ENCODE measurements at regions of chr6 and their contacts with region 1.

Region 1: DNA sequence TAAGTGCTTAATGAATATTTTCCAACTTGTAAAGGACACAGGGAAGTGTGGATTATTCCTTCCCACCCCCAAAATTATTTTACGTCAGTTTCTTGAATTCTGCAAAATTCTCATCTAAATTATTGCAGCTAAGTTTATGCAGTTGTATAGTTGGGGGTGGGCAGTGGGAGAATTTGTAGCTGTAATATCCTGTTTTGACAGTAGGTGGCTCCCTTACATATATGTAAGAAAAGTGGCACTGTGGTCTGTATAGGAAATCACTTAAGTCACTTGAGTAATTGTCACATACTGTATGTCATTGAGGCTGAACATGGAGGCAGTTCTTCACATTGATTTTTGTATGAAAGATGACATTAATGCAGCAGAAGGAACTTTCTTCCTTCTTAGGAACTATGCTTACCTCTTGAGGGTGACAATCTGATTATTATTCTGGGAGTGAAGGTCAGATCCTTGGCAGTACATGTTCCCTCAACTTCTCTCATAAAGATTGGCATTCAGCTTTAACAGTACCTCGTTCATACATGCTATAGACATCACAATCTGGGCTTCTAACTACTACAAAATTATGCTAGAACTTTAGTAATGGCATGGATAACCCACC is 14.7 kb upstream of the CFAP206 start:
- DNase-seq: peak; percentile 38
- H3K4me3 Mint-ChIP-seq: no peak overlapping the region
- H3K27ac Mint-ChIP-seq: no peak overlapping the region
- H3K4me1 Mint-ChIP-seq: no peaks in the 10 kb centered on the region
- H3K27me3 Mint-ChIP-seq: no peaks in the 10 kb centered on the region
- CTCF ChIP-seq: peak; percentile 55

Region 2: DNA sequence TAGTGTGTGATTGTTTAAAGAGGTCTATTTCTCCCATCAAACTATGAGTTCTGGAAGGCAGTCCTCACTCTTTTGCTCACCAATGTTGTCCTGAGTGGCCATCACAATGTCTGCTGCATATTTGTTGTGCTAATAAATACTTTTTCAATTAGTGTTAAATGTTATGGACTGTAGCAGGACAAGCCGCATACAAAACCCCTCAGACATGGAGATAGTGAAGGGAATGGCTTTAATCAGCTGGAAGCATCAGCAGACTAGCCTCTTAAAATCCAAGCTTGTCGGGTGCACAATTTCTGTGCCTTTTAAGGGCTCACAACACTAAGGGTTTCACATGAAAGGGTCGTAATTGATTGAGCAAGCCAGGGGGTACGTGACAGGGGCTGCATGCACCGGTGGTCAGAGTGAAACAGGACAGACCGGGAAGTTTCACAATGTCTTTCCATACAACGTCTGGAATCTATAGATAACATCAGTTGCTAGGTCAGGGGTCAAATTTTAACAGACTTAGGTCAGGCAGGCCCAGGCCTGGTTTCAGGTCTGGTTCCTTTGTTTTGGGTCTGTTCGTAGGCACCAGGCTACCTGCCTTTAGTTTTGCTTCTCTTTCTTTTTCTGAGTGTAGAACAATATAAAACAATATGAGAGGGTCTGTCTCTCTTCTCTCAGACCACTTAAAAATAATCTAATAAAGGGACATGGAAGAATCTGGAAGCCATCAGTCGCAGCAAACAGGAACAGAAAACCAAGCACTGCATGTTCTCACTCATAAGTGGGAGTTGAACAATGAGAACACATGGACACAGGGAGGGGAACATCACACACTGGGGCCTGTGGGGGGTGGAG is 783.4 kb before region 1 on chr6:
- CTCF ChIA-PET with region 1: no interaction called
- intact Hi-C with region 1: no loop called
- DNase-seq: no peak
- H3K4me3 Mint-ChIP-seq: no peak overlapping the region
- H3K27ac Mint-ChIP-seq: no peak overlapping the region
- H3K4me1 Mint-ChIP-seq: no peaks in the 10 kb centered on the region
- H3K27me3 Mint-ChIP-seq: no peaks in the 10 kb centered on the region
- CTCF ChIP-seq: no peak

Region 3: DNA sequence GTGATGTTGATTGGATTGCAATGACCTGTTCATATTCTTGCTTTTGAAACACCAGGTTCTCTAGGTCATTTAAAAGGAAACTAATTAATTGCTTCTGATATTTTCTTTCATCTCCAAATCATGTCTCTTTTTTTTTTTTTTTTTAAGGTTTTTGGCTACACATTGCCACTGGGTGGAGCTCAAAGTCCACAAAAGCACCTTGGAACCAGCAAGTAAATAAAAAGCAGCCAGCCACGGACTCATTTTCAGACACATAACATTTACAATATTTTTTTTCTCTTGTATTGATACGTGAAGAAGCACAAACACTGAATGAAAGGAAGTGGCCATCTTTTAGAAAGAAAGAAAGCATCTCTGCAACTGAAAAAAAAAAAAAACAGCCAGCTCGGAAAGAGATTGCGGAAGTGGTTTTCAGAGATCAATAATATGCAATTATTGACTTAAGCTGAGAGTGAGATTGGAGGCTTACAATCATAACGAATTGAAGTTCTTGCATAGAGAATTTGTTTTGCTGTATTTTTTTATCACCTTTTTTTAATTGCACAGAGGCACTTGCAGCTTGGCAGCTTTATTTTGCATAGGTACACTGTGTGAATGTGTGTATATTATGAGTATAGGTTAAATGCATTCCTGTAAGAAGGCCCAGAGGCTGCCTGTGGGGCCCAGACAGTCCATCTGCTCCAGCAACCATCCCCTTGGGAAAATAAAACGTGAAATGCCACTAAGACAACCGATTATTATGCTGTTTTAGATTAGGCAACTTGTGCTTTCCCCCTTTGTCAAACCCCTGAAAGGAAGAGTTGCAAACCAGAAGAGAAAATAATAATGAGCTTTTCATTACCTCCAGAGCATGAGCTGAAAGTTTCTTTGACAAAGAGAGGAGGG is 326.4 kb before region 1 on chr6:
- CTCF ChIA-PET with region 1: no interaction called
- intact Hi-C with region 1: loop called (anchors 2 kb)
- DNase-seq: peak; percentile 42
- H3K4me3 Mint-ChIP-seq: peak overlapping the region; percentile 50
- H3K27ac Mint-ChIP-seq: no peak overlapping the region
- H3K4me1 Mint-ChIP-seq: peaks cover 9% of the 10 kb centered on the region
- H3K27me3 Mint-ChIP-seq: peaks cover 29% of the 10 kb centered on the region
- CTCF ChIP-seq: peak; percentile 51

Region 4: DNA sequence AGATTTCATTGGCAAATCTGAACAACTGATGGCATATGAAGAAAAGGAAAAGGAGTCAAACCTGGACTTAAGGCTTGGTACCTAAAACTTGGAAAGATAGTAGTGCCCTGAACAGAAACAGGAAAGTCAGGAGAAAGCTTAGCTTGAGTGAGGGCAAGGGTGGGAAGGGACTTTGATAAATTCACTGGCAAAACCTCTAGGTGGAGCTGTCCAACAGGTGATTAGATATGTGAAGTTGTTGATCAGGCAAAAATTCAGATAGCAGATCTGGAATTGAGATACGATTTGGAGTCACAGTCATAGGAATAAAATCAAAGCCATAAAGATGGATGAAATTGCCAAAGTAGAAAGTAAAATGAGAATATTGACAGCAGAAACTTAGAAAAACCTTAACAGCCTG is 253.9 kb before region 1 on chr6:
- CTCF ChIA-PET with region 1: no interaction called
- intact Hi-C with region 1: loop called (anchors 1 kb)
- DNase-seq: peak; percentile 53
- H3K4me3 Mint-ChIP-seq: no peak overlapping the region
- H3K27ac Mint-ChIP-seq: no peak overlapping the region
- H3K4me1 Mint-ChIP-seq: no peaks in the 10 kb centered on the region
- H3K27me3 Mint-ChIP-seq: peaks cover 42% of the 10 kb centered on the region
- CTCF ChIP-seq: peak; percentile 71

Region 5: DNA sequence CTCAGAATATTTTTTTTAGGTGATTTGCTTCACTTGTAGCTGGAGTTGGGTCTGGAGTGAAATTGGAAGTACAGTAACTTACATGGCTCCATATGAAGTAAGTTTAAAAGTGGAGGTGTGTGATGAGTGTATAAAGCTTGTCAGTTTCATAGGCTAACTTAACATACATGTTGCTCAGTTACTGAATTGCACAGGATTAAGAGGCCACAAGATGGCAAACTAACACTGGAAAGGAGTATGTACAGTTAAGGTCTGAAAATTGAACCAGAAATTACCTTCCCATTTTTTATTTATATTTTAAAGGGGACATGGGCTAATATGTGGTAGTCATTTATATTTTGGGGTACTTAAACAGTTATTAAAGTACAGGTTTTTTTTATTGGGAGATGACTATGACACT is 116.0 kb before region 1 on chr6:
- CTCF ChIA-PET with region 1: no interaction called
- intact Hi-C with region 1: loop called (anchors 1 kb)
- DNase-seq: no peak
- H3K4me3 Mint-ChIP-seq: no peak overlapping the region
- H3K27ac Mint-ChIP-seq: no peak overlapping the region
- H3K4me1 Mint-ChIP-seq: no peaks in the 10 kb centered on the region
- H3K27me3 Mint-ChIP-seq: no peaks in the 10 kb centered on the region
- CTCF ChIP-seq: no peak

Region 6: GRCh38 chr6:87472525-87473418 is 79.7 kb after region 1 on chr6 and contains the start of gene SLC35A1:
- CTCF ChIA-PET with region 1: no interaction called
- intact Hi-C with region 1: loop called (anchors 2 kb)
- DNase-seq: peak; percentile 87
- H3K4me3 Mint-ChIP-seq: peak within 1 kb of the TSS; percentile 87
- H3K27ac Mint-ChIP-seq: peak within 1 kb of the TSS; percentile 78
- H3K4me1 Mint-ChIP-seq: peaks cover 10% of the 10 kb centered on the region
- H3K27me3 Mint-ChIP-seq: peaks cover 7% of the 10 kb centered on the region
- CTCF ChIP-seq: peak; percentile 19
- total RNA-seq, gene SLC35A1: 17.5 and 19.4 TPM in 2 replicates

Region 7: DNA sequence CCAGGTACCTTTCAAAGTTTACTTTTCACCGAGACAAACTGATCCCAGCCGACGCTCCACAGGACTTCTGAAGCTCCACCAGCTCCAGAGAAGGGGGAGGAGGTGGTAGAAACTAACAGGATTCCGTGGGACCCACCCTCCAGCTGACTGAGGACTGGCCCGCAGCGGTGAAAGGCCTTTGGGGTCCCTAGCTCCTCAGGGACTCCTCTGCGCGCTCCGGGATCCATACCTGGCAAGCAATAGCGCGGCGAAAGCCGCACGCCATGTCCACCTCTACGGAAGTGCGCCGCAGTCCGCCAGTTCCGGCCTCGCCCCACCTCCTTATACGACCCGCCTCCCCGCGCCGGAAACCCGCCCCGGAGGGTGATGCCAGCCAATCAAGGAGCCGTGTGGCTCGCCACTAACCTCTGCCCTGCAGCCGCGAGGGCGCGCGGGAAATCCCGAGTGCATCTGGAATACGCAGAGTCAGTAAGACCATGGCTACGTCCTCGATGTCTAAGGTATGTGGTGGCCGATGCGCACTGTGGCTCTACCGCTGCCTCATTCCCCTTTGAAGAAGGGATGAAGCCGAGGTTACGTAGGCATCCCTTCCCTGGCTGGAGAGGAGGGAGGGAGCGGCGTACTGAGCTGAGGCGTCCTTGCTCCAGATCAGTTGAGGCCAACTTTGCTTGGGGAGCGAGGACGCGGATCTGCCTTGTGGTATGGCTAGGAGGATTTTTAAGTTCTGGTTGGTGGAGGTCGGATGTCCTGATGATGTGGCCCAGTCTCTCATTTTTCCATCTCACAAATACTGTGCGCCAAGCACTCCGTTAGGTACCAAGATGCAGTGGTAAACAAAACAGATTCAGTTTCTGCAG is 196.8 kb after region 1 on chr6 and contains the starts of genes ORC3 and RARS2:
- CTCF ChIA-PET with region 1: no interaction called
- intact Hi-C with region 1: loop called (anchors 10 kb)
- DNase-seq: peak; percentile 97
- H3K4me3 Mint-ChIP-seq: peak within 1 kb of the TSS; percentile 88
- H3K27ac Mint-ChIP-seq: peak within 1 kb of the TSS; percentile 77
- H3K4me1 Mint-ChIP-seq: peaks cover 23% of the 10 kb centered on the region
- H3K27me3 Mint-ChIP-seq: no peaks in the 10 kb centered on the region
- CTCF ChIP-seq: no peak
- total RNA-seq, gene ORC3: 32.7 and 35.1 TPM in 2 replicates
- total RNA-seq, gene RARS2: 24.4 and 24.7 TPM in 2 replicates

Region 8: DNA sequence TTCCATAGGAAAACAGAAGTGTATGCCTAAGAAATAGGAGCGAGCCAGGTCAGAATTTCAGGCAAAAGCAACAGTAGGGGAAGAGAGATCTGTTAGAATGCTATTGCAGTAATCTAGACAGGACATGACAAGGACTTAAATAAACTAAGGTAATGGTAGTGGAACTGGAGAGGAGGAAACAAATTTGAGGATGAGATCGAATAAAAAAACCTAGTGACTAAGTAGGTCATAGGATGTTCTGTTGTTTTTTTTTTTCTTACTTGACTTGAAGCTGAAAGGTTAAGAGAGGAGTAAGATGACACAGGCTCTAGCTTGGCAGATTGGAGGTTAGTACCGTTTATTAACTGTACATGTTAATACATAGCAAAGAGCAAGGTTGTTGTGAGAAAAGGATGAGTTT is 225.4 kb after region 1 on chr6:
- CTCF ChIA-PET with region 1: no interaction called
- intact Hi-C with region 1: no loop called
- DNase-seq: no peak
- H3K4me3 Mint-ChIP-seq: no peak overlapping the region
- H3K27ac Mint-ChIP-seq: no peak overlapping the region
- H3K4me1 Mint-ChIP-seq: no peaks in the 10 kb centered on the region
- H3K27me3 Mint-ChIP-seq: no peaks in the 10 kb centered on the region
- CTCF ChIP-seq: no peak

Region 9: DNA sequence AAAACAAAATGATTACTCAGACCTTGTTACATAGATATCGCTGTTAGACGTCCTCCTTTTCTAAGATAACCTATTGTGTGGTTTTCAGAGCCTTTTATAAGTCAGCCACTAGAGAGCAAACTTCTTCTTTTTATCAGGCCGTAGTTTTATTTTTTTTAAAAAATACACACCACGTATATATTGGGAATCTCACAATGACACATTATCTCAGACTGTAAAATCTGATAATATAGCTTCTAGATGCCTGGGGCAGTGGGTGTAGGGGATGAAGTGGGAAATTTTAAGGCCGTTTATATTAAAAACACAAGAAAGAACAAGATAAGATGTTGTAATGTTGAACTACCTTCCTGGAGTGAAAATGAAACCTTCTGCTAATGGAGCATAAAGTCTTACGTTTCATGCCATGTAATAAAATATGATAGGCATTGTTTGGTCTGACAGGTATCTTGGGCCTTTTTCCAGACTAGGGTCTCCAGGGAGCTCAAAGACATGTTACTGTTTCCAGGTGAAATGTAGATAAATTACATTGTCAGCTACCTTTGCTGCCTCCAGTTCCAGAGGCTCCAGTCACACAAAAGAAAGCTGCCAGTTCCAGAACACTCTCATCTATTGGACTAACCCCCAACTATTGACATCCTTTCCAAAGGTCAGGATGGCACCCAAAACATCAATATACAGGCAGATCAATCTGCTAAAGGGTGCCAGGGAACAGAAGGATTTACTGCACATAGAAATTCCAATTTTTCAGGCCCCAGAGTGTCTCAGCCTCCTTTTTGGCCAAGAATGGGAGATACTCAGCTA is 439.1 kb after region 1 on chr6:
- CTCF ChIA-PET with region 1: no interaction called
- intact Hi-C with region 1: no loop called
- DNase-seq: no peak
- H3K4me3 Mint-ChIP-seq: peak overlapping the region; percentile 39
- H3K27ac Mint-ChIP-seq: peak overlapping the region; percentile 35
- H3K4me1 Mint-ChIP-seq: peaks cover 8% of the 10 kb centered on the region
- H3K27me3 Mint-ChIP-seq: no peaks in the 10 kb centered on the region
- CTCF ChIP-seq: no peak

Measured in Calu3 (cell line).